ENCODE measurements at regions of chr19 and their contacts with region 1.

Region 1: DNA sequence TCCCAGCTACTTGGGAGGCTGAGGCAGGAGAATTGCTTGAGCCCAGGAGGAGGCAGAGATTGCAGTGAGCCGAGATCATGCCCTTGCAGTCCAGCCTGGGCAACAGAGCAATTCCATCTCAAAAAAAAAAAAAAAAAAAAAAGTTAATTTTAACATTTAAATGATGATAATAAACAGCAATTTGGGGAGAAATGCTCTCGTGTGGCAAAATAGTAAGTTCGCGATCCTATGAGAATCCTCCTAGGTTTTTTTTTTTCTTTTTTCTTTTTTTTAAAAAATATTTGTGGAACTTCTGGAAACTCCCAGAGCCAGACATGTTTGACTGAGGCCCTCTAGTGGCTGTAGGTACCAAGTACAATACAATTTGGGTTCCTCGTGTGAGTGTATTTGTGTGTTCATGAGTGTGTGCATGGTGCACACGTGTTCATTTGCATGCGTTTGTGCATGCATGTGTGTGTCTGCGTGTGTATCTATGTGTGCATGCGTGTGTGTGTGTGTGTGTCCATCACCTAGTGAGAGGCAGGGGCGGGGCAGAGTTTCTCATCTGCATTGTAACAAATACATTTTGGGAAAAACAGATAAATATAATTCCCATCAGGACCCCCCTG is 31.2 kb downstream of the TMPRSS9 start:
- DNase-seq: peak in 4 of 10 donors; percentile 20 to 47 (median 36)

Region 2: DNA sequence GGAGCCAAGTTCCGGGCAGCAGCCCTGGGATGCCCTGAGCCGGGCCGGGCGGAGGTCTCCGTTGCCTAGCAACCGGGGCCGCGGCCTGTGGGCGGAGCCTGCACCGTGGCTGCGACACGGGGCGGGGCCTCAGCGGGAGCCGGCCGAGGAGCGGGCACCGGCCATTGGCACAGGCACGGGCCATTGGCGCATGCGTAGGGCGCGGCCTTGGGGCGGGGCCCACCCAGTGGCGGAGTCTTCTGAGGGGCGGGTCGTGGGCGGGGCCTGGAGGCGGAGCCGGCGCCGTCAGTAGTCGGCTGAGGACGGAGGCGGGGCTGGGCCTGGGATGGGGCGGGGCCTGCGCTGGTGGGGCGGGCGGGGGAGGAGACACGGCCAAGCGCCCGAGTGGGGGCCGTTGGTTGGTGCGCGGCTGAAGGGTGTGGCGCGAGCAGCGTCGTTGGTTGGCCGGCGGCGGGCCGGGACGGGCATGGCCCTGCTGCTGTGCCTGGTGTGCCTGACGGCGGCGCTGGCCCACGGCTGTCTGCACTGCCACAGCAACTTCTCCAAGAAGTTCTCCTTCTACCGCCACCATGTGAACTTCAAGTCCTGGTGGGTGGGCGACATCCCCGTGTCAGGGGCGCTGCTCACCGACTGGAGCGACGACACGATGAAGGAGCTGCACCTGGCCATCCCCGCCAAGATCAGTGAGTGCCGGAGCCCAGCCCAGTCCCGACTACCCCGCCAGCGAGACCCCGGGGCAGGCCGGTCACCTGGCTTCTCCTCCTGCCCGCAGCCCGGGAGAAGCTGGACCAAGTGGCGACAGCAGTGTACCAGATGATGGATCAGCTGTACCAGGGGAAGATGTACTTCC is 294.5 kb before region 1 on chr19 and contains the start of gene IZUMO4:
- intact Hi-C with region 1: no loop called
- DNase-seq: peak; percentile 98 to 100 (median 100)

Region 3: DNA sequence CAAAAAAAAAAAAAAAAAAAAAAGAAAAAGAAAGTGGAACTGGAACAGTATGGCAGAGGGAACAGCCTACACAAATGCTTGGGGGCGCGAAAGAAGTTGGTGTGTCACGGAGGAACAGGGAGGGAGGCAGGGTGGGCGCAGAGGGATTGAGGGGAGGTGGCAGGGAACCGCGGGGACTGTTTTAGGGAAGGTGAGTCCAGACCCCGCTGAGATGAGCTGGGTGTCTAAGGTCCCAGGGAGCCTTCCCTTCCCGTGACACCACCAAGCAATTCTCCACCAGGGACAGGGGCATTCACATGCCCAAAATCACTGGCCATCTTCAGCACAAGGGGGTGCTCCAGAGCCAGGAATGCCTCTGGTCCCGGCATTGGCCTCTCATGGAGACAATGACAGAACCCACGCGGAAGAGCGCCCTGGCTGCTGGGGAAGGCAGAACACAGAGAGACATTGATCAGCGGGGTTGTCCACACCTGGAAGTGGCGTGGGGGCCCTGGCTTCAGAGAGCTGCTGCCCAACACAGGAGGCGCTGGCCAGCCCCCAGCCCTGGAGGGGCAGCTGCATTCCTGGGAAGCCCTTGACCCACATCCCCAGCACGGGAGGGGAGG is 116.2 kb before region 1 on chr19:
- intact Hi-C with region 1: loop called (anchors 1 kb)
- DNase-seq: peak in 9 of 10 donors; percentile 60 to 95 (median 76)

Region 4: GRCh38 chr19:2332341-2333026 is 58.7 kb before region 1 on chr19:
- intact Hi-C with region 1: loop called (anchors 5 kb)
- DNase-seq: no peak